K562 (cell line): ENCODE measurements at regions of chr15 and their contacts with region 1.

Region 1: DNA sequence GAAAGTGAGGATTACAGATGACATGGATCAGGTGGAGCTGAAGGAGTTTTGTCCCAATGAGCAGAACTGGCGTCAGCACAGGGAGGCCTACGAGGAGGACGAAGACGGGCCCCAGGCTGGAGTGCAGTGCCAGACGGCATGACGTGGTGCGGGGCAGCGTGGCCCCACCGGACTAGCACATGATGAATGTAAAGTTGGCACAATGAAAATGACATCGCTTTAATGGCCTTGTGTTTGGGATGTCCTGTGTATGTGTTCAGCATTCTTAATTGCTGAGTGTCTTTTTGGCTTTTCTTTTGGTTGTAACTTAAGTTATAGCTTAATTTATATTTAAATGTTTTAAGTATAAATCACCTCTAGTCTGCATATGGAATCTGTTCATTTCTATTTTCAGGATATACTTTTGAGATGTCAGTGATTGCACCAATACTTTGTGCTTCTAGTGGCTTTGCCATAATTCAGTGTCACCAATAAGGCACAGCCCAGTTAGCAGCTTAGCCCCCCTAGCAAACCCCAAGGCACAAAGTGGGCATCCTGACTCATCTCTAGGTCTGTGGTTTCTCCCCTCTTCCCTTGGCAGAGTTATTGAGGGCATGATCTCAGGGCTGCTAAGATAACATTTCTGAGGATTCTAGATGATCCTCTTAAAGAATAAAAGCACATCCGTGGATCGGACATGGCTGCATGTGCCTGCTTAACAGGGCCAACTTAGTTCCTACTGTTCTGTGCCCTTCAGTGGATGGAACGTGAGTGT is 16.1 kb downstream of the DNAJA4 start:
- DNase-seq: no peak
- ATAC-seq: no peak
- H3K4me3 ChIP-seq: no peak overlapping the region
- H3K27ac ChIP-seq: no peak overlapping the region
- H3K4me1 ChIP-seq: peaks cover 17% of the 10 kb centered on the region in 2 experiments
- H3K27me3 ChIP-seq: no peaks in the 10 kb centered on the region
- CTCF ChIP-seq: no peak
- EP300 ChIP-seq: no peak
- POLR2A ChIP-seq: no peak
- RAD21 ChIP-seq: no peak

Region 2: DNA sequence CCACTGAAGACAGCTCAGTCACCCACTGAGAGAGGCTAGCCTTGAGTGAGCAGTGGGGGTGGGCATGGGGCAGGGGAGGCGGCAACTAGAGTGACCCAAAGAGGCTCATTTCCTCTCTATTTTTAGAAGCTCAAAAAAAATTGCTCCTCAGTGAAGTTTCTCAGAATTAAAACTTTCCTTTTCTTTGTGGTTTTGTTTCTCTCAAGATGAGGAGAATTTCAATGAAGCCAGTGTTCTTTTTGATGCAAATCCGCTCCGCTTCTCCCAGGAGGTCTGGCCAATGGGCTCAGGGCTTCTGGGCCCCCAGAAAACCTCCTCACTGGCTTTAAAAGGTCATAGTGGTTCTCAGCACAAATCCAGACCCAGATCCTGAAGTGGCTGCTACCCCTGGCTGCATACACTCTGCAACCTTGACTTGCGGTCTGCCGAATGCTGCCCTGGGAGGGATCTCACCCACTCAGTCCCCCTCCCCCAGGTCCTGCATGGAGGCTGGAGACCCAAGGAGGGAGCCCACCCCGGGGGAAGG is 45.9 kb before region 1 on chr15 and contains the start of gene ACSBG1:
- CTCF ChIA-PET with region 1: no interaction called
- POLR2A ChIA-PET with region 1: no interaction called
- in situ Hi-C with region 1: no loop called
- intact Hi-C with region 1: no loop called
- DNase-seq: no peak
- ATAC-seq: no peak
- H3K4me3 ChIP-seq: no peak within 1 kb of the TSS
- H3K27ac ChIP-seq: no peak within 1 kb of the TSS
- H3K4me1 ChIP-seq: peaks cover 0 to 4% of the 10 kb centered on the region in 2 experiments; a peak in 1 of 5 replicates
- H3K27me3 ChIP-seq: peaks cover 17 to 50% of the 10 kb centered on the region in 2 experiments; a peak in 4 of 5 replicates
- CTCF ChIP-seq: no peak
- EP300 ChIP-seq: no peak
- POLR2A ChIP-seq: no peak
- RAD21 ChIP-seq: no peak
- polyA plus RNA-seq, gene ACSBG1: 0.36 to 0.75 TPM

Region 3: DNA sequence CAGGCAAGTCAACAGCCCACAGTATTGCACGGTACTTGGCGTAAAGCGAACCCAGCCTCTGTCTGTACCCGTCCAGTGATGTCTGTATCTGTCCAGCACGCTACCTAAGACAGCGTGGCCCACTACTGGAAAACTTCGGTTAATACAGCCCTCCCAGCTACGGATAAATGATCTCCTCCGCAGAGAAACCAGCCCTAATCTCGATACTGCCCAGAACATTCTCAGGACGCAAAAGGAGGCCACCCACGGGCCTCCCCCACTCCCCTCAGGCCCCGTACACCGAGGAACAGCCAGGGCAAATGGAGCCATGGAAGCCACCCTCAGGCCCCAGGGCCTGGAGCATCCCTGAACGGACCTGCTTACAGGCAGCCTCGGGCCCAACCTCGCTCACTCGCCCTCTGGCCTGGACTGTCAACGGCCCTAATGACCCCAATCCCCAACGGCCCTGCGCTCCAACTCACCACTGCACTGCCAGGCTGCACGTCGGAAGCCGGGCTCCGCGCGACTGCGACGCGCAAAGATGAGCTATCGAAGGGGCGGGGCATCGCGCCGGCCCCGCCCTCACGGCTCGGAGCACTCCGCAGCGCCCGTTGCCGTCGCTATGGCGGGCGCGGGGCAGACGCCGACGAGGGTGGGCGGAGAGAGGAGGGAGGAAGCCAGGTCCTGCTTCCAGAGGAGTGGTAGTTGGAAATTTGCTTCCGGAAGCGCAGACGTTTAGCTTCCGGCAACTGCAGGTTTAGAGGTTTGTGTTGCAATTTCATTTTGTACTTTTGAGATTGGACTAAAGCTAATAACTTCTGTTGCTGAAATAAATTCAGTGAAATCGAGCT is 18.8 kb after region 1 on chr15 and contains the start of gene SKIC8:
- CTCF ChIA-PET with region 1: no interaction called
- POLR2A ChIA-PET with region 1: interaction called, 11 read pairs
- in situ Hi-C with region 1: no loop called
- intact Hi-C with region 1: no loop called
- DNase-seq: peak; percentile 92 to 97 (median 94)
- ATAC-seq: peak; percentile 91
- H3K4me3 ChIP-seq: peak within 1 kb of the TSS; percentile 82
- H3K27ac ChIP-seq: peak within 1 kb of the TSS; percentile 92
- H3K4me1 ChIP-seq: peaks cover 23 to 28% of the 10 kb centered on the region in 2 experiments
- H3K27me3 ChIP-seq: no peaks in the 10 kb centered on the region
- CTCF ChIP-seq: 0 out of 6 replicates have a peak, but pooled peaks of 1 of the 3 experiments have one; percentile 9
- EP300 ChIP-seq: peak; percentile 25; the same call in 1 of the 2 replicates
- POLR2A ChIP-seq: peak; percentile 95
- RAD21 ChIP-seq: no peak
- polyA plus RNA-seq, gene SKIC8: 352 to 389 TPM